Activated naive CD4-positive, alpha-beta T cell treated with anti-CD3 and anti-CD28 coated beads, Interleukin-2, amount 10 ng/mL, durations not matched to agents 7 days and 5 days (primary cell): ENCODE measurements at regions of chr11 and their contacts with region 1.

Region 1: GRCh38 chr11:36478700-36479329 is 31.3 kb downstream of the TRAF6 start:
- DNase-seq: peak; percentile 43
- H3K4me3 Mint-ChIP-seq: no peak overlapping the region
- H3K27ac Mint-ChIP-seq: no peak overlapping the region
- H3K4me1 Mint-ChIP-seq: peaks cover 6% of the 10 kb centered on the region
- H3K27me3 Mint-ChIP-seq: no peaks in the 10 kb centered on the region

Region 2: GRCh38 chr11:36265793-36266628 is 212.8 kb before region 1 on chr11:
- CTCF ChIA-PET with region 1: interaction called, 21 read pairs
- DNase-seq: peak; percentile 68
- H3K4me3 Mint-ChIP-seq: no peak overlapping the region
- H3K27ac Mint-ChIP-seq: no peak overlapping the region
- H3K4me1 Mint-ChIP-seq: no peaks in the 10 kb centered on the region
- H3K27me3 Mint-ChIP-seq: peaks cover 25% of the 10 kb centered on the region

Region 3: GRCh38 chr11:36289226-36289852 is 189.5 kb before region 1 on chr11 and contains the start of gene COMMD9:
- CTCF ChIA-PET with region 1: interaction called, 175 read pairs
- DNase-seq: peak; percentile 97
- H3K4me3 Mint-ChIP-seq: peak within 1 kb of the TSS; percentile 88
- H3K27ac Mint-ChIP-seq: peak within 1 kb of the TSS; percentile 85
- H3K4me1 Mint-ChIP-seq: peaks cover 27% of the 10 kb centered on the region
- H3K27me3 Mint-ChIP-seq: peaks cover 4% of the 10 kb centered on the region

Region 4: GRCh38 chr11:36300651-36301050 is 178.2 kb before region 1 on chr11:
- CTCF ChIA-PET with region 1: interaction called, 175 read pairs
- DNase-seq: no peak
- H3K4me3 Mint-ChIP-seq: no peak overlapping the region
- H3K27ac Mint-ChIP-seq: no peak overlapping the region
- H3K4me1 Mint-ChIP-seq: no peaks in the 10 kb centered on the region
- H3K27me3 Mint-ChIP-seq: peaks cover 7% of the 10 kb centered on the region

Region 5: GRCh38 chr11:36306888-36307287 is 171.9 kb before region 1 on chr11:
- CTCF ChIA-PET with region 1: interaction called, 17 read pairs
- DNase-seq: no peak
- H3K4me3 Mint-ChIP-seq: no peak overlapping the region
- H3K27ac Mint-ChIP-seq: no peak overlapping the region
- H3K4me1 Mint-ChIP-seq: peaks cover 2% of the 10 kb centered on the region
- H3K27me3 Mint-ChIP-seq: peaks cover 3% of the 10 kb centered on the region

Region 6: DNA sequence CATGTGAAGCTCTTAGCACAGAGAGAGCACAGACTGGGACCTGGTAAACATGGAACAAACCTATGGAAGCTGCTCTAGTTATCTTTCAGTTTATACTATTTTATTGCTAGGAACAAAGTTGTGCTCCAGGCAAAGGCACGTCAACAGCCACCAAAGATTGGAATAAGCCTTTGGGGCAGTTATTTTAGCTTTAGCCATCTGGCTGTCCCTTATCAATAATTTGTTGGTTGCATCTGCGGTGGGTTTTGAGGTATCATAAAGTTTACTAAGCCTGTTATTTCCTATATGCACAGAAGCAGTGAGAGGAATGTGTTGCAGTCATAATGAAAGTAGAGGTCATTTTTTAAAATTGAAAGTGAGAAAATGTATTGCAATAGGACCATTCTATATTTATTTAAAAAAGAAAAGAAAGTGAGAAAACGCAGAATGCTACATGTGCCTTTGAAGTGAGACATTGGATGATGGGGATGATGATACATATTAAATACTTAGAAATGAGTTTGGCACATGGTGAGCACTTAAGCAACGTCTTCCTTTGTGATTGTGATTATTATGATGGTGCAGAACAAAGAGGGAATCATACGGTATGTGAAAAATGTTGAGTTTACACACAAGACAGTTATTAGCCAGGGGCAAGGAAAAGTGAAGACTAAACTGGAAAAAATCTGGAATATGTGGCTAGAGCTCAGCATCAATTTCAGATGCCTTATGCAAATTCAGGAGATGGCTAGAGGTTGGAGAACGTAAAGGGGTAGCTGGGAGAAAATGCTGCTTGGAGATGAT is 124.4 kb before region 1 on chr11:
- CTCF ChIA-PET with region 1: interaction called, 75 read pairs
- DNase-seq: no peak
- H3K4me3 Mint-ChIP-seq: no peak overlapping the region
- H3K27ac Mint-ChIP-seq: no peak overlapping the region
- H3K4me1 Mint-ChIP-seq: peaks cover 50% of the 10 kb centered on the region
- H3K27me3 Mint-ChIP-seq: peaks cover 15% of the 10 kb centered on the region

Region 7: DNA sequence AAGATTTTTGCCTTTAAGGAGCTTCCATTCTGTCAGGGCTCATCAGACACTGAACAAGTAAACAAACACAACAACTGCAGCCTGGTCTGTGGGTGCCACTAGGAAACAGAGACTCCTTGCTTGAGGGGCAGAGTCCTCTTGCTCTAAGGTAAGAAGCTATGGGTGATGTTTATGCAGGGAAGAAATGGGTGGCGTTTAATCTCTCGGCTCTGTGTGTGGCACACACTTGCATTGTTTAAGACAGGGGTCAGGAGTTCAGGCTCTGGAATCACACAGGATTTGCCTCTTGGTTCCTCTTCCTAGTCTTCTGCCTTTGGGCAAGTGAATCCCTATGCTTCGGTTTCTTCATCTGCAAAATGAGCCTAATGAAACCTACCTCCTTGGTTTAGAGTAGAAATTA is 92.4 kb before region 1 on chr11:
- CTCF ChIA-PET with region 1: no interaction called
- DNase-seq: no peak
- H3K4me3 Mint-ChIP-seq: no peak overlapping the region
- H3K27ac Mint-ChIP-seq: no peak overlapping the region
- H3K4me1 Mint-ChIP-seq: peaks cover 4% of the 10 kb centered on the region
- H3K27me3 Mint-ChIP-seq: peaks cover 17% of the 10 kb centered on the region

Region 8: GRCh38 chr11:36398231-36398953 is 80.4 kb before region 1 on chr11:
- CTCF ChIA-PET with region 1: no interaction called
- DNase-seq: no peak
- H3K4me3 Mint-ChIP-seq: no peak overlapping the region
- H3K27ac Mint-ChIP-seq: no peak overlapping the region
- H3K4me1 Mint-ChIP-seq: peaks cover 27% of the 10 kb centered on the region
- H3K27me3 Mint-ChIP-seq: no peaks in the 10 kb centered on the region

Region 9: DNA sequence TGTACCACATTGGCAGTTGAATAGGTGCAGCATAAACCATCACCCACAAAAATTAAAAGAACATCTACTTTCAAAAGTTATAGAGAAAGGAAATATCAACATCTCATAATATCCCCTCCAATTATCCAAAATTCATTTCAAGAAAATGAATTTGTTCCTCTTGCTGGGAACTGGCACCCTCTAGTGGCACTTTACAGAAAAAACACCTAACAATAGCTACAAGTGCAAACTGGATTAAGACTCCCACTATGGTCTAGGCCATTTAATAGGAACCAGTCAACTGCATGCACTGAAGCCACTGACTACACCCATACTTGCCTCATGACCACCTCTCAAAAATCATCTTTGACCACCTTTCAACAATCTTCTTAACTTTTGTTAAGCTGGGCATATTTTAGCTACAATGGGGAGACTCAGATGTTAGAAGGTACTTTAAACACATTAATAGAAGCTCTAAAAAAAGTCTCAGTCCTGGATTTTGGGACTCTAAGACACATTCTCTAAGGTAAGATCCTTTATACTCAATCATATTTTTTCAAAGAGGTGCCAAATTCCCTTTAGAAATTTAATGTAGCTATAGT is 14.0 kb after region 1 on chr11:
- CTCF ChIA-PET with region 1: interaction called, 25 read pairs
- DNase-seq: peak; percentile 48
- H3K4me3 Mint-ChIP-seq: no peak overlapping the region
- H3K27ac Mint-ChIP-seq: no peak overlapping the region
- H3K4me1 Mint-ChIP-seq: peaks cover 14% of the 10 kb centered on the region
- H3K27me3 Mint-ChIP-seq: no peaks in the 10 kb centered on the region

Region 10: GRCh38 chr11:36594316-36594989 is 115.6 kb after region 1 on chr11 and contains the start of gene IFTAP:
- CTCF ChIA-PET with region 1: no interaction called
- DNase-seq: peak; percentile 38
- H3K4me3 Mint-ChIP-seq: peak within 1 kb of the TSS; percentile 83
- H3K27ac Mint-ChIP-seq: no peak within 1 kb of the TSS
- H3K4me1 Mint-ChIP-seq: peaks cover 6% of the 10 kb centered on the region
- H3K27me3 Mint-ChIP-seq: peaks cover 26% of the 10 kb centered on the region